Common myeloid progenitor, CD34-positive (primary cell): ENCODE measurements at regions of chr16 and their contacts with region 1.

Region 1: GRCh38 chr16:30948667-30949649 is at the start of gene ORAI3:
- DNase-seq: peak; percentile 62 to 84 (median 78)
- H3K4me3 ChIP-seq: peak within 1 kb of the TSS; percentile 61 to 99 (median 87)
- H3K27ac ChIP-seq: peak within 1 kb of the TSS; percentile 67 to 89
- H3K4me1 ChIP-seq: peaks cover 2 to 39% (median 30%) of the 10 kb centered on the region in 4 experiments
- H3K27me3 ChIP-seq: no peaks in the 10 kb centered on the region

Region 2: GRCh38 chr16:30896261-30896888 is 52.6 kb before region 1 on chr16 and contains the start of gene CTF1:
- CTCF ChIA-PET with region 1: no interaction called
- POLR2A ChIA-PET with region 1: no interaction called
- DNase-seq: peak; percentile 50 to 75 (median 62)
- H3K4me3 ChIP-seq: peak within 1 kb of the TSS; percentile 35 to 88 (median 71)
- H3K27ac ChIP-seq: peak within 1 kb of the TSS; percentile 58 to 80
- H3K4me1 ChIP-seq: peaks cover 3 to 46% (median 37%) of the 10 kb centered on the region in 4 experiments
- H3K27me3 ChIP-seq: no peaks in the 10 kb centered on the region

Region 3: DNA sequence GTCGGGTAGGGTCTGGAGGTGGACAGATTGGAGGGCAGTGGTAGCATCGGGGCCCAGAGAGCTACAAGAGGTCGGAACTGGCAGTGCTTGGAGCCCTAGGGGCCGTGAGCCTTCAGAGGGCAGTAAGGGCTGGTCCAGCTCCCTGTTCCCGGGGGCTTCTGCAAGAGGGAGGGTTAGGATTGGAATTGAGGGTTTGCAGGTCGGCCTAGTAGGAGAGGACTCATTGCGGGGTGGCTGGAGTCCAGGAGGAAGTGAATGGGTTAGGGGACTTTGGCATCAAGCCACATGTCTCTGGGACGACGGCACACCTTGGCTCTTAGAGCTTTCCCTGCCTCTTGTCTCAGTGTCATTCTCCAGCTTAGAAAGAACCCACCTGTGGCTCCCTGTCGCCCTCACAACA is 13.4 kb before region 1 on chr16:
- CTCF ChIA-PET with region 1: interaction called, 98 read pairs
- POLR2A ChIA-PET with region 1: no interaction called
- DNase-seq: no peak
- H3K4me3 ChIP-seq: no peak overlapping the region
- H3K27ac ChIP-seq: no peak overlapping the region
- H3K4me1 ChIP-seq: peaks cover 0 to 24% (median 23%) of the 10 kb centered on the region in 4 experiments
- H3K27me3 ChIP-seq: no peaks in the 10 kb centered on the region

Region 4: DNA sequence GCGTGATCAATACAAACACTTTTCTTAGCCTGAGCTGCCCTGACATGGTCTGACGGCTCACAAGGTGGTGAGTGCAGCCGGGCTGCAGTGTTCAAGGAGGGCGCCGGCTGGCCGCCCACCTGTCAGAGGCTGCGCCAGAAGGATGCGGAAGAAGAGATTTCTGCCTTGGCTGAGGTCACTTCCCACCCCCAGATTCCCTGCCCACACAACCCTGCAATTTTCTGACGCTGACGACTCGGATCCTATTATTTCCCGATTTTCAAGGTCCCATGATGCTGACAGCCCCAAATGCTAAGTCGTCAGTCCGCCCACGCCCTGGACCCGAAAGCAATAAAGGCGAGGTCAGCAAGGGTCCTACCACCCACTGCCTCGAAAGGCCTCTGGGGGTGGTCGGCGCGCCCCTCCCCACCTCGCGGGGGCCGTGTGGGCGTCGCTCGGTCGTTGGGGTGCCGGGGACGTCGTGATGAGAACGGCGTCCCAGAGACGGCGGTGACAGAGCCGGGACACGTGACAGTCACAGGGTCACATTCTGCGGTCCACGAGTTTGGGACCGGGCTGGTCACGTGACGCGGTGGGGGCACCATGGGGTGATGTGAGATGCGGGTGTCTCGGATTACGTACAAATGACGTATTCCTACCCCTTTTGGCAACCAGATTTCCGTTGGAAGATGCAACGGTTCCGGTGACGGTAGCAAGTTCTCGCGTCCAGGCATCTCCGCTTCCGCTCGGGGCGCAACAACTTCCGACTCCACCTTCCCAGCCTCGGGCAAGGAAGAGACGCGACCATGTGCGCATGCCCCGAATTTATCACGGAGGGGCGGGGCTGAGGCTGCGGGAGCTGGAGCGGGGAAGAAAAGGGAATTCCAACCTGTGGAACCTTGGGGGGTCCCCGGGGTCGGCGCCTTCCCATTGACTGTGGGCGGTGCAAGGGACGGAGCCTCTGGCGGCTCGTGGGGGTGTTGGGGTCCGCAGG is 84.1 kb after region 1 on chr16 and contains the start of gene STX4:
- CTCF ChIA-PET with region 1: no interaction called
- POLR2A ChIA-PET with region 1: no interaction called
- DNase-seq: peak; percentile 100
- H3K4me3 ChIP-seq: peak within 1 kb of the TSS; percentile 79 to 100 (median 94)
- H3K27ac ChIP-seq: peak within 1 kb of the TSS; percentile 96 to 97
- H3K4me1 ChIP-seq: peaks cover 3 to 26% (median 21%) of the 10 kb centered on the region in 4 experiments
- H3K27me3 ChIP-seq: no peaks in the 10 kb centered on the region